Breast epithelium (tissue), 4 donors: ENCODE measurements at regions of chr11 and their contacts with region 1.

Region 1: GRCh38 chr11:72105888-72106287 is at the start of gene TOMT:
- DNase-seq: no peak
- H3K4me3 ChIP-seq: no peak within 1 kb of the TSS
- H3K27ac ChIP-seq: no peak within 1 kb of the TSS
- H3K4me1 ChIP-seq: peaks cover 10 to 13% of the 10 kb centered on the region in 2 donors
- H3K27me3 ChIP-seq: no peaks in the 10 kb centered on the region
- CTCF ChIP-seq: no peak
- POLR2A ChIP-seq: no peak
- total RNA-seq, gene TOMT: not detected

Region 2: GRCh38 chr11:73314117-73314961 is 1208.5 kb after region 1 on chr11:
- intact Hi-C with region 1: loop called (anchors 5 kb)
- DNase-seq: no peak
- H3K4me3 ChIP-seq: peak overlapping the region in 2 of 3 donors; percentile 81 to 82
- H3K27ac ChIP-seq: peak overlapping the region; percentile 88 to 99
- H3K4me1 ChIP-seq: peaks cover 21 to 48% of the 10 kb centered on the region in 2 donors
- H3K27me3 ChIP-seq: no peaks in the 10 kb centered on the region
- CTCF ChIP-seq: no peak
- POLR2A ChIP-seq: no peak